ENCODE measurements at regions of chr17 and their contacts with region 1.

Region 1: GRCh38 chr17:61481421-61481820 is 29.2 kb downstream of the TBX4 start:
- DNase-seq: peak in 1 of 2 experiments; percentile 44
- H3K4me3 ChIP-seq: no peak overlapping the region
- H3K27ac ChIP-seq: no peak overlapping the region
- H3K4me1 ChIP-seq: peaks cover 1 to 5% (median 3%) of the 10 kb centered on the region in 4 experiments; a peak in 4 of 7 replicates
- H3K27me3 ChIP-seq: no peaks in the 10 kb centered on the region
- CTCF ChIP-seq: peak in 2 of 3 experiments; percentile 30 to 36; a peak in 2 of 4 replicates
- EP300 ChIP-seq: no peak
- POLR2A ChIP-seq: no peak
- RAD21 ChIP-seq: no peak; a peak in 1 of 4 replicates

Region 2: DNA sequence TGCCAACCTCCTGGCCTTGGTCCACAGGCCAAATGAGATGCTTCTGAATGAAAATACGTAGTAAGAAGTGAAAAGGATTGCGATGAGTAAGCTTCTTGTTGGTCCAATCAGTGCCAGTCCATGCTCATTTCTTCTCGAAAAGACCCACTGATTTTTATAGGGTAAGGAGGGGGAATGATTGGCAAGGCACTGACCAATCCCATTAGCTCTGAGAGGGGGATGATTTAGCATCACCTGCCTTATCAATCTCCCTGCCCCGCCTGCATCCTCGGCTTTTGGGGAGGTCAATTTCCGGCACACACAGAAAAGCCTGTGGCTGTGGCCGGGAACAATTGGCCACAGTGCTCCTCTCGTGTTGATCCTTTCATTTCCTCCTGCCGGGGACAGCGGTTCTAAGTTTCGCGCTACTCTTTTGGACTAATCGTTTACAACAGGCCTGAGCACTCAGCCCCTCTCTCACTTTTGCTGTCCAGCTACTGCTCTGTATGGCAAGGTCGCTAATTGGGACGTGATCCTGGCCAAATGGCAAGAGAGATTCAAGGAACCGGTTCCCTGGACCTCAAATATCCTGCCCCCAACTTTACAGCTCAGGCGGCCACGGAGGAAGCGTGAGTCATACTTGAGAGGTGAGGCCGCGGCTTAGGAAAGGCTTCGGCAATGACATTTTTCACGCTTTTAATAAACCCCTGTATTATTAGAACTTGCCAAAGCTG is 13.9 kb after region 1 on chr17:
- CTCF ChIA-PET with region 1: interaction called, 34 read pairs
- POLR2A ChIA-PET with region 1: no interaction called
- DNase-seq: no peak
- H3K4me3 ChIP-seq: no peak overlapping the region
- H3K27ac ChIP-seq: no peak overlapping the region
- H3K4me1 ChIP-seq: peaks cover 0 to 3% (median 2%) of the 10 kb centered on the region in 4 experiments; a peak in 3 of 7 replicates
- H3K27me3 ChIP-seq: no peaks in the 10 kb centered on the region
- CTCF ChIP-seq: no peak
- EP300 ChIP-seq: no peak
- POLR2A ChIP-seq: no peak
- RAD21 ChIP-seq: no peak

Region 3: DNA sequence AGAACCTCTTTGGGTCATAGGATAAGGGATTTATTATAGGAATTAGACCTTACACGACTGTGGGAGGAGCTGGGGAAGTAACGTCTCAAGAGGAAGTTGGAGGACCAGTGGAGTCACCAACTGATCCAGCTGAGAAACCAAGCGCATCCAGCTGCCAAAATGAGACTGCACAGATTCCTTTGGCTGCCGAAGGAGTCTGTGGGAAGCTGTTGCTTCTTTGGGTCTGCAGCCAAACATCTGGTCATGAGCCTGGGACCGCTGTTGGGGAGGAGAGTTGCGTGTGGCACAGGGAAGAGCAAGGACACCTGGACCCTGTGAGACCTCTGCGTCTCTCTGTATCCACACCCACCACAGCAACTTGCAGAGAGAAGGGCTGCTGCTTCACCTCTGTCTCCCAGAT is 112.0 kb after region 1 on chr17:
- CTCF ChIA-PET with region 1: no interaction called
- POLR2A ChIA-PET with region 1: no interaction called
- DNase-seq: no peak
- H3K4me3 ChIP-seq: no peak overlapping the region
- H3K27ac ChIP-seq: no peak overlapping the region
- H3K4me1 ChIP-seq: no peaks in the 10 kb centered on the region
- H3K27me3 ChIP-seq: no peaks in the 10 kb centered on the region
- CTCF ChIP-seq: no peak
- EP300 ChIP-seq: no peak
- POLR2A ChIP-seq: no peak
- RAD21 ChIP-seq: no peak

Region 4: GRCh38 chr17:61713035-61713434 is 231.6 kb after region 1 on chr17:
- CTCF ChIA-PET with region 1: no interaction called
- POLR2A ChIA-PET with region 1: no interaction called
- DNase-seq: no peak
- H3K4me3 ChIP-seq: no peak overlapping the region
- H3K27ac ChIP-seq: no peak overlapping the region
- H3K4me1 ChIP-seq: no peaks in the 10 kb centered on the region
- H3K27me3 ChIP-seq: no peaks in the 10 kb centered on the region
- CTCF ChIP-seq: no peak
- EP300 ChIP-seq: no peak
- POLR2A ChIP-seq: no peak
- RAD21 ChIP-seq: no peak